Activated CD8-positive, alpha-beta memory T cell treated with anti-CD3 and anti-CD28 coated beads, Interleukin-2, amount 10 ng/mL, durations not matched to agents 7 days and 5 days (primary cell): ENCODE measurements at regions of chr17 and their contacts with region 1.

Region 1: GRCh38 chr17:74961657-74962490 is 10.7 kb downstream of the HID1 start:
- DNase-seq: peak; percentile 87
- ATAC-seq: peak; percentile 82
- H3K4me3 Mint-ChIP-seq: no peak overlapping the region
- H3K27ac Mint-ChIP-seq: no peak overlapping the region
- H3K4me1 Mint-ChIP-seq: peaks cover 7% of the 10 kb centered on the region
- H3K27me3 Mint-ChIP-seq: no peaks in the 10 kb centered on the region

Region 2: GRCh38 chr17:74833501-74834377 is 128.1 kb before region 1 on chr17:
- CTCF ChIA-PET with region 1: no interaction called
- DNase-seq: no peak
- ATAC-seq: no peak
- H3K4me3 Mint-ChIP-seq: no peak overlapping the region
- H3K27ac Mint-ChIP-seq: no peak overlapping the region
- H3K4me1 Mint-ChIP-seq: no peaks in the 10 kb centered on the region
- H3K27me3 Mint-ChIP-seq: no peaks in the 10 kb centered on the region

Region 3: DNA sequence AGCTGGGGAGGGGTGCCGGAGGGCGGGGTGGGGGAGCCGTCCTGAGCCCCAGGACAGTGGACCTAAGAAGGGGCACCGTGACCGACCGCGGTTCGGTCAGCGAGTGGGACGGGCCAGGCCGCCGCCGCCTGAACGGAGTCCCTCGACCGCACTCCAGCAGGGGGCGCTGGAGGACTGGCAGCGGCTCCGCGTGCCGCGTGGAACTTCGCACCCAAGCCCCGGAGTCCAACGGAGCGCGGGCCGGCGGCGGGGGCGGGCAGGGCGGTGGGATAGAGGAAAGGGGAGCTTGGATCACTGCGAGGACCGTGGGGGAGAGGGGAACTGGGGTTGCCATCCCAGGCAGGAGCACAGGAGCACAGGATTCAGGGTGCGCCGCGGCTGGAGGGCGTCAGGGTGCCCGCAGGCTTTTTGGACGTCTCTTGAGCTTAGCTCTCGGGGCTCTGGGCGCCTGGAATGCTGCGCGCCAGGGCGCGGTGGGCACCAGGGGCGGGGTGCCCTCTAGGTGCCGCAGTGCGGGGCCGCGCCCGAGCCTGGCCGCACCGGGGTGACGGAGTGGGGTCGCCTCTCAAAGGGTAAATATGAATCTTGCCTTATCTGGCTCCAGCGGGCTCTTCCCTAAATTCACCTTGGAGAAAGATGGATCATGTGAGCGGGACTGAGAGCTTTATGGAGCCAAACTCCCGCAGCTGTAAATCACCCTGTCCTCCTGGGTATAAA is 38.2 kb before region 1 on chr17:
- CTCF ChIA-PET with region 1: interaction called, 116 read pairs
- DNase-seq: peak; percentile 74
- ATAC-seq: peak; percentile 71
- H3K4me3 Mint-ChIP-seq: no peak overlapping the region
- H3K27ac Mint-ChIP-seq: no peak overlapping the region
- H3K4me1 Mint-ChIP-seq: peaks cover 6% of the 10 kb centered on the region
- H3K27me3 Mint-ChIP-seq: peaks cover 90% of the 10 kb centered on the region

Region 4: GRCh38 chr17:74972107-74972972 is 10.5 kb after region 1 on chr17 and contains the start of gene HID1:
- CTCF ChIA-PET with region 1: interaction called, 80 read pairs
- DNase-seq: peak; percentile 75
- ATAC-seq: peak; percentile 93
- H3K4me3 Mint-ChIP-seq: peak within 1 kb of the TSS; percentile 60
- H3K27ac Mint-ChIP-seq: no peak within 1 kb of the TSS
- H3K4me1 Mint-ChIP-seq: peaks cover 6% of the 10 kb centered on the region
- H3K27me3 Mint-ChIP-seq: peaks cover 36% of the 10 kb centered on the region
- total RNA-seq, gene HID1: not detected

Region 5: DNA sequence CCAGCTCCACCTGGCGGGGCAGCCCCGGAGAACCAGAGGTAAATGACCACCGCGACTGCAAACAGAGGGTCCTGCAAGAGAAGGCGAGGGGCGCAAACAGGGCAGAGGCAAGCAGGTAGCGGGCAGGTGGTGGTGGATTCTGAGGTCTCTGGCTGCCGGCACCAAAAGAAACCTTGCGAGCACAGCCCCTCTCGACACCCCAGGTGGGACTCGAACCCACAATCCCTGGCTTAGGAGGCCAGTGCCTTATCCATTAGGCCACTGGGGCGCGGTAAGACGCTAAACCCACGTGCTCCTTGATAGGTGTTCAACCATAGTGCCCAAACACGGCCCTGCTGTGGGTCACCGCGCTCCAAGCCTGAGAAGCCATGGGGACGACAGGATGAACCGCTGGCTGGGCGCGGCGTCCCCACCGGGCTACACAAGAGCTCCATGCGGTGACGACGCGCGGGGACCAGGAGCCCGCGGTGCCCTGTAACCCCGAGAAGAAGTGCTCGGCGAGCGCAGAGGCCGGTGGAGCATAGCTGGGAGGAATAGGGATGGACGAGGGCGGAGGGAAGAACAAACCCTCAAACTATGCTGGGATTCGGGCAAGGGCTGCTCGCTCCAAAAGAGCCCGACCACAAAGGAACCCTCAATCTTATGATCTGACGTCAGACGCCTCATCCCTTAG is 72.5 kb after region 1 on chr17:
- CTCF ChIA-PET with region 1: interaction called, 20 read pairs
- DNase-seq: peak; percentile 94
- ATAC-seq: peak; percentile 70
- H3K4me3 Mint-ChIP-seq: peak overlapping the region; percentile 91
- H3K27ac Mint-ChIP-seq: peak overlapping the region; percentile 93
- H3K4me1 Mint-ChIP-seq: peaks cover 44% of the 10 kb centered on the region
- H3K27me3 Mint-ChIP-seq: no peaks in the 10 kb centered on the region

Region 6: DNA sequence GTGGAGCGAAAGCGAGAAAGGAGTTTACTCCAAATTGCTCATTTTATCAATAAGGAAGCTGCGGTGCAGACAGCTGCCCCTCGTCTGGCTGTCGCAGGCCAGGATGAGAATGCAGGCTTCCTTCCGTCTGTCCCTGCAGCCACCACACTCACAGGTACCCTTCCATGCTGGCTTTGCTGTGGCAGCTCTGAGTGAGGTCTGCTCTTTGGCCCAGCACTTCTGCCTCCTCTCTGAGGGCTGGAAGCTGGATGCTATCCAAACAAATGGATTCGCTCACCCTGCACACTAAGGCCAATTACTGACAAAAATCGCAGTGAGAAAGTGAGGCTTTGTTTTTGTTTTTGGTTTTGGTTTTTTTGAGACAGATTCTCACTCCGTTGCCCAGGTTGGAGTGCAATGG is 154.9 kb after region 1 on chr17:
- CTCF ChIA-PET with region 1: interaction called, 35 read pairs
- DNase-seq: no peak
- ATAC-seq: no peak
- H3K4me3 Mint-ChIP-seq: no peak overlapping the region
- H3K27ac Mint-ChIP-seq: no peak overlapping the region
- H3K4me1 Mint-ChIP-seq: peaks cover 22% of the 10 kb centered on the region
- H3K27me3 Mint-ChIP-seq: no peaks in the 10 kb centered on the region

Region 7: GRCh38 chr17:75199886-75200618 is 238.2 kb after region 1 on chr17:
- CTCF ChIA-PET with region 1: interaction called, 53 read pairs
- DNase-seq: no peak
- ATAC-seq: no peak
- H3K4me3 Mint-ChIP-seq: no peak overlapping the region
- H3K27ac Mint-ChIP-seq: no peak overlapping the region
- H3K4me1 Mint-ChIP-seq: peaks cover 11% of the 10 kb centered on the region
- H3K27me3 Mint-ChIP-seq: no peaks in the 10 kb centered on the region